ENCODE measurements at regions of chr7 and their contacts with region 1.

Region 1: GRCh38 chr7:108660460-108660859 is 90.8 kb downstream of the DNAJB9 start:
- DNase-seq: no peak
- H3K4me3 ChIP-seq: no peak overlapping the region
- H3K27ac ChIP-seq: no peak overlapping the region
- H3K4me1 ChIP-seq: no peaks in the 10 kb centered on the region
- H3K27me3 ChIP-seq: peaks cover 5% of the 10 kb centered on the region
- CTCF ChIP-seq: peak; percentile 17 to 22

Region 2: GRCh38 chr7:107902381-107902780 is 758.1 kb before region 1 on chr7:
- CTCF ChIA-PET with region 1: no interaction called
- dilution Hi-C with region 1: no loop called
- in situ Hi-C with region 1: no loop called
- intact Hi-C with region 1: no loop called
- DNase-seq: no peak
- H3K4me3 ChIP-seq: no peak overlapping the region
- H3K27ac ChIP-seq: no peak overlapping the region
- H3K4me1 ChIP-seq: no peaks in the 10 kb centered on the region
- H3K27me3 ChIP-seq: no peaks in the 10 kb centered on the region
- CTCF ChIP-seq: no peak

Region 3: GRCh38 chr7:108711611-108712010 is 51.2 kb after region 1 on chr7:
- CTCF ChIA-PET with region 1: no interaction called
- dilution Hi-C with region 1: no loop called
- in situ Hi-C with region 1: no loop called
- intact Hi-C with region 1: no loop called
- DNase-seq: no peak
- H3K4me3 ChIP-seq: no peak overlapping the region
- H3K27ac ChIP-seq: no peak overlapping the region
- H3K4me1 ChIP-seq: no peaks in the 10 kb centered on the region
- H3K27me3 ChIP-seq: no peaks in the 10 kb centered on the region
- CTCF ChIP-seq: no peak

Region 4: DNA sequence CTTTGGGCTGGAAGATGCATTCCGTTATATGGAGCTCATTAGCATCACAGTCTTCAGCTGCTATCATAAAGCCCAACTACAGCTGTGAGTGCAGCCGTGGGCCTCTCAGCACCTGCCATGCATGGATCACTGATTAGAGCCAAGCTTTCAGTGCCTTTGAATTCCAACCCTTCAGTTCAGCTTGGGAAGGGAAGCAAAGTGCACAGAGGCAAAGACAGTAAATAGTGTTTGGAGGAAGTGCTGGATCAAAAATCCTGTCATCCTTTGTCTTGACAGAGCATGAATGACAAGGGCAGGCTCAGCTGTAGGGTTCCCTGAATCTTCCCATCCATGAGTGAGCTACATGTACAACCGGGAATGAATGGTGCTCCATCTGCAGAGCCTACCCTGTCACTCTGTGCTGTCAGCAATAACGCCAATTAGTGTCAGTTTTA is 62.9 kb after region 1 on chr7:
- CTCF ChIA-PET with region 1: no interaction called
- dilution Hi-C with region 1: no loop called
- in situ Hi-C with region 1: no loop called
- intact Hi-C with region 1: no loop called
- DNase-seq: no peak
- H3K4me3 ChIP-seq: no peak overlapping the region
- H3K27ac ChIP-seq: no peak overlapping the region
- H3K4me1 ChIP-seq: no peaks in the 10 kb centered on the region
- H3K27me3 ChIP-seq: peaks cover 2% of the 10 kb centered on the region
- CTCF ChIP-seq: no peak

Region 5: GRCh38 chr7:108736221-108736891 is 75.9 kb after region 1 on chr7:
- CTCF ChIA-PET with region 1: no interaction called
- dilution Hi-C with region 1: loop called (anchors 5 kb)
- in situ Hi-C with region 1: no loop called
- intact Hi-C with region 1: no loop called
- DNase-seq: no peak
- H3K4me3 ChIP-seq: no peak overlapping the region
- H3K27ac ChIP-seq: no peak overlapping the region
- H3K4me1 ChIP-seq: no peaks in the 10 kb centered on the region
- H3K27me3 ChIP-seq: no peaks in the 10 kb centered on the region
- CTCF ChIP-seq: no peak

Region 6: DNA sequence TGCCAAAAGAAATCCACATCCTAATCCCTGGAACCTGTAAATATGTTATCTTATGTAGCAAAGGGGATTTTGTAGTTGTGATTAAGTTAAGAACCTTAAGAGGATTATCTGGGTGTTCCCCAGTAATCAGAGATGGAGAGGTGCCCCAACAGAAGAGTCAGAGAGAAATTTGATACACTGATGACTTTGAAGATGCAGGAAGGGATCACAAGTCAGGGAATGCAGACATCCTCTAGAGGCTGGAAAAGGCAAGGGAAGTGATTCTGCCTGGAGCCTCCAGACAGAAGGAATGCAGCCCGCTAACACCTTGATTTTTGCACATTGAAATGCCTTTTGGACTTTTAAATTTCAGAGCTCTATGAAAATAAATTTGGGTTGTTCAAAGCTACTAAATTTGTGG is 440.9 kb after region 1 on chr7:
- CTCF ChIA-PET with region 1: no interaction called
- dilution Hi-C with region 1: no loop called
- in situ Hi-C with region 1: no loop called
- intact Hi-C with region 1: no loop called
- DNase-seq: no peak
- H3K4me3 ChIP-seq: no peak overlapping the region
- H3K27ac ChIP-seq: no peak overlapping the region
- H3K4me1 ChIP-seq: no peaks in the 10 kb centered on the region
- H3K27me3 ChIP-seq: no peaks in the 10 kb centered on the region
- CTCF ChIP-seq: no peak